PC-3 (cell line): ENCODE measurements at regions of chr9 and their contacts with region 1.

Region 1: DNA sequence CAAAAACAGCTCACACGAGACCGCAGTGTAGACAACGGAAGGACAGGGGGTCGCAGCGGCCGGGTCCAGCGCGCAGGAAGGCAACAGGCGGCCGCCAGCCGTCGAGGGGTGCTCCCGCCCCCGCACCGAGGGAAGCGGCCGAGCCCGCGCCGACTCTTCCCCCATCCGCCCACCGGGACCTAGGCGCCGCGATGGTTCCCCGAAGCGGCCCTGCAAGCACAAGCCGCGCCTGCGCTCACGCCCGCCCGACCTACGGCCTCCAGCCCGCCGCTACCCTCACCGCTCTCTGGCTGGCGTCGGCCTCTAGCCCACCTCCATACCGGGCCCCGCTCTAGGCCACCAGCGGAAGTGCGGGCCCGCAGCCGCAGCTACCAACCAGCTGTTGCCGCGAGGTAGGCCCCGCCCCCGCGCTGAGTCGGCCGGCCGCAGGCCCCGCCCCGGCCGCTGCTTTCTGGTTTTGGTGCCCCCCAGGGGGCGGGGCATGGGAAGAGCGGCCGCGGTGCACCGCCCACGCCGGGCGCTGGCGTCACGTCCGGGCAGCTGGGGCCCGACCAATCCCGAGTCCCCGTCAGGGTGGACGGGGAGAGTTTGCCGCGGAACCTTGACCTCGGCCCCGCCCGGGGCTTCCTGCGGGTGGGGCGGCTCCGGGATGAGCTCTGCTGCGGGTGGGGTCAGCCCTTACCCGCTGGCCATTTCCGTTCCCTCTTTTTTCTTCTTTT is at the start of gene SETX:
- DNase-seq: peak; percentile 96
- ATAC-seq: peak; percentile 95
- H3K4me3 ChIP-seq: peak within 1 kb of the TSS; percentile 89
- H3K27ac ChIP-seq: peak within 1 kb of the TSS; percentile 48
- H3K4me1 ChIP-seq: peaks cover 16% of the 10 kb centered on the region; the same call in 1 of the 2 replicates
- H3K27me3 ChIP-seq: no peaks in the 10 kb centered on the region
- CTCF ChIP-seq: no peak
- total RNA-seq, gene SETX: 21.0 and 22.7 TPM in 2 replicates

Region 2: DNA sequence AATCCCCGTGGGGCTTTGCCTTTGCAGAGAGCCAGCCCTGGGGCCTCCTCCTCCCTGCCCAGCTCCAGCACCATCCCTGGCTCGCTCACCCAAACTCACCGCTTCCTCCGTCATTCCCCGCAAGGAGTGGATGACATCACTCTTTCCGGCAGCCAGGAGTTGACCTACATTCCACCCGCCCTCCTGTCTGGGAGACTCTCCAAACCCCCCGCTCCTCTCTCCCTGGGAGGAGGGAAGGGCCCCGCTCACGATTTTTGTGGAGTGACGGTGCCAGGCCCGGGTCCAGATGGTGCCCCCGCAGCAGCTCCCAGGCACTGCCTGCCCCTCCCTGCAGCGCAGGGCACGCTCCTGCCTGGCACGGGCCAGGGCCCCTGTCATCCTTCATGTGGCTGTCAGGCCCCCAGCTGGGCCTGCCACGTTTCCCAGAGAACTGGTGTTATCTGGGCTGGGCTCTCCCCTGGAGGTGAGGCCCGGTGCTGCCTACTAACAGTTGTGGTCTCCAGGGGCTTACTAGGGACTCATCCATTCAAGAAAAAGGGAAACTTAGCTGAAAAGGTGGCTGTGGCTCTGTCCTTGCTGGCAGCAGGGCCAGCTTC is 140.7 kb before region 1 on chr9:
- CTCF ChIA-PET with region 1: no interaction called
- POLR2A ChIA-PET with region 1: no interaction called
- intact Hi-C with region 1: no loop called
- DNase-seq: peak; percentile 70
- ATAC-seq: peak; percentile 90
- H3K4me3 ChIP-seq: peak overlapping the region; percentile 31; the same call in 1 of the 2 replicates
- H3K27ac ChIP-seq: 0 out of 2 replicates have a peak overlapping the region, but pooled peaks have one; percentile 11
- H3K4me1 ChIP-seq: peaks cover 11% of the 10 kb centered on the region
- H3K27me3 ChIP-seq: no peaks in the 10 kb centered on the region
- CTCF ChIP-seq: no peak

Region 3: DNA sequence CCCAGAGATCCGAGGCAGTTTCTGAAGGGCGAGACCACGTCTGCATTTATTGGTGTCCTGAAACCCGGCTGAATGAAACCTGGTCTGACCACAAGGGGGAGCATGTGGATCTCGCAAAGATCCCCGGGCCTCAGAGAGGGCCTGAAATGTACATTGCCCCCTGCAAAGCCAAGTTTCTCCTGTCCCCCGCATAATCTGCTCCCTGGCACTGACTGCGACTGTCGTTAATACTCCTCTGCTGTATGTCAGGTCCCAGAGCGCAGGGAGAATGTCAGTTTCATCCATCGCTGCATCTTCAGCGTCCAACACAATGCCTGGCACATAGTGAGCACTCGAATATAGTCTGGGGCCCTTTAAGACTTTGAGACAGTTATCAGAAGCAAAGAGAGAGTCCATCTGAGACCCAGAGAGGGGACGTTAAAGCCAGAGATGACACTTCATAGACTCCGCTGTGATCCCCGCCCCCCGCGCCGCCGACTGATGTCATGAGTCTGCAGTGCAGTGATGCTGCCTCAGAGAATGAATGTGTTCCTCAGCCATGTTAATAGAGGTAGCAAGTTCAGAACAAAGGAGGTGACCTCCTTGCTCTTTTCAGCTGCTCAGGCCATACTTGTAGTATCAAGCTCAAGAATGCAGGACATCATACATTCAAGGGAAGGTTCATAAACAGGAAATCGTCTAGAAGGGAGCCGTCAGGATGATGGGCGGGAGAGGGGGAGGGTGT is 153.1 kb after region 1 on chr9:
- CTCF ChIA-PET with region 1: no interaction called
- POLR2A ChIA-PET with region 1: no interaction called
- intact Hi-C with region 1: no loop called
- DNase-seq: peak; percentile 75
- ATAC-seq: peak; percentile 82
- H3K4me3 ChIP-seq: no peak overlapping the region
- H3K27ac ChIP-seq: no peak overlapping the region
- H3K4me1 ChIP-seq: no peaks in the 10 kb centered on the region
- H3K27me3 ChIP-seq: peaks cover 24% of the 10 kb centered on the region
- CTCF ChIP-seq: peak; percentile 81

Region 4: DNA sequence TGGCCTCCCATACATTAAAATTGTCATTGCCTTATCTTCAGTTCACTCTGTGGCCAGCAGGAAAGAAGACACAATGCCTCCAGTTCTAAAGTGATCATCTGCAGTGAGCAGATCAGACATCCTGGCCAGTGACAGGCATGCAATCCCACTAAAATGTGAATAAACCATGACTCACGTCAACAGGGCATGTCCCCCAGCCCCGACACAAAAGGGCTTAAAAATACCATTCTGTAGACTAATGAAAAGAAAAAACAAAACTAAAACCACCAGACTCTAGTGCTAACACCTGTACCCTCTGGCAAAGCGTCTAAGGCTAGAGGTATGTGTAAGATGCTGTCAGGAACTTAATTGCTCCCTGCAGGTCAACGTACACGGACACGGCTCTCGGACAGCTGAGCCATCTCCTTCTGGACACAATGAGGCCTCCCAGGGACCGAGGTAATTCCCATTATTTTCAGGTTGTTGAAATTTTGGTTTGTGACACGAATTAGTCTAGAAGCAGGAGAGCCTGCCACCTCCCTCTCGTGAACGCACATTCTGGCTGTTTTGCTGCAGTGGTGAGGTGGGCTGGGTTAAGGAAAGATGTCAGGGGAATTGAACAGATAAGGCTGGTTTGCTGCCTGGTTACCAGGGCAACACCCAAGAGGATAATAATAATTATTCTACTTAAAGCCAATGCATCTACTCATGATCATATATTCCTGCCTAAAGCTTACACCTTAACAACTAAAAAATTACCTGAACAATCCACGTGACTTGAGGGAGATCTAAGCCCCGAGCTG is 276.7 kb after region 1 on chr9:
- CTCF ChIA-PET with region 1: no interaction called
- POLR2A ChIA-PET with region 1: interaction called, 17 read pairs
- intact Hi-C with region 1: no loop called
- DNase-seq: peak; percentile 90
- ATAC-seq: peak; percentile 84
- H3K4me3 ChIP-seq: peak overlapping the region; percentile 15; the same call in 1 of the 2 replicates
- H3K27ac ChIP-seq: peak overlapping the region; percentile 81
- H3K4me1 ChIP-seq: peaks cover 50% of the 10 kb centered on the region
- H3K27me3 ChIP-seq: no peaks in the 10 kb centered on the region
- CTCF ChIP-seq: no peak

Region 5: GRCh38 chr9:132651254-132651653 is 296.5 kb after region 1 on chr9:
- CTCF ChIA-PET with region 1: no interaction called
- POLR2A ChIA-PET with region 1: no interaction called
- intact Hi-C with region 1: no loop called
- DNase-seq: peak; percentile 78
- ATAC-seq: peak; percentile 83
- H3K4me3 ChIP-seq: no peak overlapping the region
- H3K27ac ChIP-seq: peak overlapping the region; percentile 81
- H3K4me1 ChIP-seq: peaks cover 41% of the 10 kb centered on the region
- H3K27me3 ChIP-seq: no peaks in the 10 kb centered on the region
- CTCF ChIP-seq: peak; percentile 74

Region 6: DNA sequence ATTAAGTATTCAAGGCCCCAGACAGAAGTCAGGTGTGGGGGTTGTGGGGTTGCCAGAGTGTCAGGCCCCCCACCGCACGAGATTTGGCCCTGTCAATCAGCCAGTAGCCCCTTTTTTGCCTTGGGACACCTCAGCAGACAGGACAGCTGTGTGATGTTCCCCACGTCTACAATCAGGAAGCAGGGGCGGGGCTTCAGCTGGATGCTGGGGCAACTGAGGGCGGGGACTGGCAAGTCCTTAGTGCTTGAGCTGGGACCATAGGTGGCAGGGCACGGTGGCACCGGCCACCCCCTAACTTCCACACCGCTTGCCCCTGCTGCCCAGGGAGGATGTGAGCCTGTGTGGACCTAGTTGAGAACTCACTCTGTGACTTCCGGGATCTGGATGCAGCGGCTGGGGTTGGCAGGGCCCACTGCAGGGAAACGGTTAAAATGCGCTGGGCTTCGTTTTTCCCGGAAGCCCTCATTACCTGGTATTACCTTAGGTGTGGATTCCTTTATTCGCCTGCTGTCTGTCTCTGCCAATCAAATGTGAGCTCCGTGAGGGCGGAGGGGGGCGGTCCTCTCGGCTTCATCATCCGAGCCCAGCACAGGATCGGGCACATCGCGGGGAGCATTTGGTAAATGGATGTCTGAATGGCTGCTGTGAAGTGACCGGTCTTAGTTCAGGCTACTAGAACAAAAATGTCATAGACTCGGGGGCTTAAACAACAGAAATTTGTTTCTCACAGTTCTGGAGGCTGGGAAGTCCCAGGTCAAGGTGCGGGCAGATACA is 668.5 kb after region 1 on chr9:
- CTCF ChIA-PET with region 1: interaction called, 14 read pairs
- POLR2A ChIA-PET with region 1: no interaction called
- intact Hi-C with region 1: no loop called
- DNase-seq: no peak
- ATAC-seq: no peak
- H3K4me3 ChIP-seq: no peak overlapping the region
- H3K27ac ChIP-seq: no peak overlapping the region
- H3K4me1 ChIP-seq: no peaks in the 10 kb centered on the region; the same call in 1 of the 2 replicates
- H3K27me3 ChIP-seq: 0 out of 2 replicates have a peak, but pooled peaks cover under 1% of the 10 kb centered on the region
- CTCF ChIP-seq: no peak